GM12878 (cell line): ENCODE measurements at regions of chr10 and their contacts with region 1.

Region 1: DNA sequence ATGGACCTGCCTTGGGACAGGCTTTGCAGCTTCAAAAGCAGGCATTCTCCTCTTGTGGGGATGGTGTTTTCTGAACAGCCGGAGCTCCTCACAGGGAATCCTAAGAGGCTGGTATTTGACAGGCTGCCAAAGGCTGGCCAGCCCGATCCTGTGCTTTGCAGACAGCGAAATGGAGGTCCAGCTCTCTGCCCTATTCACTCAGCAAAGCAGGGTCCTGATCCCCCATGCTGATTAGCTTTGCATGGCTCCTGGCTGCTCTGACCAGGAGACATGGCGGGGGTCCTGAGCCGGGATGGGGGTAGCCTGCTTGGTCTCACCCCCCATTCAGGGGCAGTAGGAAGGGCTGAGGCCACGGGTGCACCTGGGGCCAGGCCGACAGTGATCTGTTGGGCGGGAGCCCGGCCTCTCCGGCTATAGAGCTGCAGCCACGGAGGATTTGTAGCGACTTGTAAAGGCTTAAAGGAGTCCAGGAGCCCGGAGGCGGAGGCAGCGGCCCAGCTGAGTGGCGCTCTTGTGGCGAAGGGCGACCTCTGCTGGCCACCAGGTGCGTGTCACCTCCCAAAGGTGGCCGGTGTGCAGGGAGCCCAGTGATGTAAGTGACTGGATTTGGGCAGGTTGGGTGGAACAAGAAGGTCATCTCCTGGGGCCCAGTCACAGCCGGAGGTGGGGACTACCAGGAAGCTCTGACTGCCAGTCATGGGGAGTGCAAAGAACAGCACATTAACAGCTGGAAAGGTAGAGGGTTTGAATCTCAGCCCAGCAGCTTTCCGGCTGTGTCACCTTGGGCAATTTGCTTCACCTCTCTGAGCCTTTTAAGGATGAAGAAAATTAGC is 126.5 kb downstream of the ZMIZ1 start:
- DNase-seq: no peak
- ATAC-seq: peak; percentile 94
- H3K4me3 ChIP-seq: no peak overlapping the region
- H3K27ac ChIP-seq: no peak overlapping the region
- H3K4me1 ChIP-seq: no peaks in the 10 kb centered on the region
- H3K27me3 ChIP-seq: no peaks in the 10 kb centered on the region
- CTCF ChIP-seq: peak; percentile 88 to 97 (median 92)
- EP300 ChIP-seq: no peak
- POLR2A ChIP-seq: no peak
- RAD21 ChIP-seq: peak; percentile 91

Region 2: GRCh38 chr10:78047314-78047891 is 1147.9 kb before region 1 on chr10:
- CTCF ChIA-PET with region 1: interaction called, 42 read pairs
- POLR2A ChIA-PET with region 1: no interaction called
- RAD21 ChIA-PET with region 1: interaction called, 34 read pairs
- SMC1A ChIA-PET with region 1: interaction called, 21 read pairs
- in situ Hi-C with region 1: loop called (anchors 5 kb)
- intact Hi-C with region 1: loop called (anchors 1 kb)
- DNase-seq: no peak
- ATAC-seq: peak; percentile 81
- H3K4me3 ChIP-seq: no peak overlapping the region
- H3K27ac ChIP-seq: no peak overlapping the region
- H3K4me1 ChIP-seq: peaks cover 17% of the 10 kb centered on the region
- H3K27me3 ChIP-seq: no peaks in the 10 kb centered on the region
- CTCF ChIP-seq: peak; percentile 88 to 92 (median 91)
- EP300 ChIP-seq: no peak
- POLR2A ChIP-seq: no peak
- RAD21 ChIP-seq: peak; percentile 90

Region 3: GRCh38 chr10:78437998-78438906 is 757.1 kb before region 1 on chr10:
- CTCF ChIA-PET with region 1: no interaction called
- POLR2A ChIA-PET with region 1: no interaction called
- RAD21 ChIA-PET with region 1: no interaction called
- SMC1A ChIA-PET with region 1: no interaction called
- in situ Hi-C with region 1: no loop called
- intact Hi-C with region 1: loop called (anchors 10 kb)
- DNase-seq: no peak
- ATAC-seq: peak; percentile 73
- H3K4me3 ChIP-seq: no peak overlapping the region
- H3K27ac ChIP-seq: no peak overlapping the region
- H3K4me1 ChIP-seq: no peaks in the 10 kb centered on the region
- H3K27me3 ChIP-seq: peaks cover 0 to 2% of the 10 kb centered on the region in 2 experiments; a peak in 2 of 4 replicates
- CTCF ChIP-seq: peak in 1 of 3 experiments; percentile 24; a peak in 2 of 6 replicates
- EP300 ChIP-seq: no peak
- POLR2A ChIP-seq: no peak
- RAD21 ChIP-seq: no peak

Region 4: GRCh38 chr10:78664929-78665553 is 530.3 kb before region 1 on chr10:
- CTCF ChIA-PET with region 1: interaction called, 31 read pairs
- POLR2A ChIA-PET with region 1: no interaction called
- RAD21 ChIA-PET with region 1: interaction called, 4 read pairs
- SMC1A ChIA-PET with region 1: interaction called, 9 read pairs
- in situ Hi-C with region 1: no loop called
- intact Hi-C with region 1: loop called (anchors 1 kb)
- DNase-seq: no peak
- ATAC-seq: no peak
- H3K4me3 ChIP-seq: no peak overlapping the region
- H3K27ac ChIP-seq: no peak overlapping the region
- H3K4me1 ChIP-seq: no peaks in the 10 kb centered on the region
- H3K27me3 ChIP-seq: no peaks in the 10 kb centered on the region
- CTCF ChIP-seq: peak; percentile 29 to 58 (median 50); a peak in 4 of 6 replicates
- EP300 ChIP-seq: no peak
- POLR2A ChIP-seq: no peak
- RAD21 ChIP-seq: peak; percentile 26; the same call in 1 of the 2 replicates

Region 5: DNA sequence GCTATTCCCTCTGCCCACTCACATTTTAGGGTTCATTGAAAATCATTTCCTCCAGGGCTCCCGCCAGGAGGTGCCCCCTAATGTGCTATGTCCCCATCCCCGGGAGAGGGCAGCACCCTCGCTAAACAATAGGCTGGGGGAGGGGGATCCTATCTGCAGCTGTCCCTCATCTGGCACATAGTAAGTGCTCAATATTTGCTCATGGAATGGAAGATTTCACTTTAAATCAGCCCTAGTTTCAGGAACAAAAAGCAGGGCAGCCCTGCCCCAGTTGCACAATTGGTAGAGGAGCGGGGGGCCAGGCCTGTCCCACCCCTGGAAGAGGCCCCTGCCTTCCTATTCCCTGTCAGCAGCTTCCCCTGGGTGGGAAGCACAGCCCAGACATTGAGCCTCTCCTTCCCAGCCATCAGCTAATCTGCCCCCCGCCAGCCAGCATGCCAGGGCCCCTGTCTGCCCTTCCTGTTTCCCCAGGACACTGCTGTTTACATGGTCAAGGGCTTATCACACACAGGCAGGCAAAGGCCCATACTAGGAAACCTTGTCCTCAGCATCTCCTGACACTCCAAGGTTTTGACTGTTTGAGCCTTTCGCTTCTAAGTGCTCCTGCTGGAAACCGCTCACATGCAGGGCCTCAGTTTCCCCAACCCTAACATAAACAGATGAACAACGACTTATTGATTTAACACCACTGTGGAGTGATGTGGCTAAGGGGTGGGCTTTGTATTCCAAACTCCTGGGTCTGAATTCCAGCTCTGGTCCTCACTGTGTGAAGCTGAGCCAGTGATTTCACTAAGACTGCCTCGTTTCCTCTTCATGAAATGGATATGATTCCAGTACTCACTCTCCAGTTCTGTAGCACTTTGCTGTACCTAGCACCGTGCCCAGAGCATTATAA is 257.3 kb before region 1 on chr10:
- CTCF ChIA-PET with region 1: interaction called, 4 read pairs
- POLR2A ChIA-PET with region 1: no interaction called
- RAD21 ChIA-PET with region 1: interaction called, 5 read pairs
- SMC1A ChIA-PET with region 1: interaction called, 5 read pairs
- in situ Hi-C with region 1: no loop called
- intact Hi-C with region 1: loop called (anchors 1 kb)
- DNase-seq: no peak
- ATAC-seq: peak; percentile 55
- H3K4me3 ChIP-seq: no peak overlapping the region
- H3K27ac ChIP-seq: no peak overlapping the region
- H3K4me1 ChIP-seq: no peaks in the 10 kb centered on the region
- H3K27me3 ChIP-seq: peaks cover 0 to 2% of the 10 kb centered on the region in 2 experiments; a peak in 2 of 4 replicates
- CTCF ChIP-seq: peak; percentile 24 to 35 (median 29); a peak in 4 of 6 replicates
- EP300 ChIP-seq: no peak
- POLR2A ChIP-seq: no peak
- RAD21 ChIP-seq: peak; percentile 41; the same call in 1 of the 2 replicates

Region 6: GRCh38 chr10:79068562-79069324 is 126.6 kb before region 1 on chr10 and contains the start of gene ZMIZ1:
- CTCF ChIA-PET with region 1: interaction called, 4 read pairs
- POLR2A ChIA-PET with region 1: no interaction called
- RAD21 ChIA-PET with region 1: interaction called, 8 read pairs
- SMC1A ChIA-PET with region 1: no interaction called
- in situ Hi-C with region 1: no loop called
- intact Hi-C with region 1: loop called (anchors 2 kb)
- DNase-seq: no peak
- ATAC-seq: peak; percentile 58
- H3K4me3 ChIP-seq: peak within 1 kb of the TSS; percentile 84
- H3K27ac ChIP-seq: no peak within 1 kb of the TSS
- H3K4me1 ChIP-seq: peaks cover 4% of the 10 kb centered on the region; the same call in 1 of the 2 replicates
- H3K27me3 ChIP-seq: peaks cover 3 to 7% of the 10 kb centered on the region in 2 experiments
- CTCF ChIP-seq: peak; percentile 13 to 36 (median 19); a peak in 3 of 6 replicates
- EP300 ChIP-seq: 0 out of 4 replicates have a peak, but pooled peaks of 1 of the 2 experiments have one; percentile 14
- POLR2A ChIP-seq: no peak
- RAD21 ChIP-seq: peak; percentile 55
- polyA plus RNA-seq, gene ZMIZ1: 3.1 to 4.5 TPM

Region 7: DNA sequence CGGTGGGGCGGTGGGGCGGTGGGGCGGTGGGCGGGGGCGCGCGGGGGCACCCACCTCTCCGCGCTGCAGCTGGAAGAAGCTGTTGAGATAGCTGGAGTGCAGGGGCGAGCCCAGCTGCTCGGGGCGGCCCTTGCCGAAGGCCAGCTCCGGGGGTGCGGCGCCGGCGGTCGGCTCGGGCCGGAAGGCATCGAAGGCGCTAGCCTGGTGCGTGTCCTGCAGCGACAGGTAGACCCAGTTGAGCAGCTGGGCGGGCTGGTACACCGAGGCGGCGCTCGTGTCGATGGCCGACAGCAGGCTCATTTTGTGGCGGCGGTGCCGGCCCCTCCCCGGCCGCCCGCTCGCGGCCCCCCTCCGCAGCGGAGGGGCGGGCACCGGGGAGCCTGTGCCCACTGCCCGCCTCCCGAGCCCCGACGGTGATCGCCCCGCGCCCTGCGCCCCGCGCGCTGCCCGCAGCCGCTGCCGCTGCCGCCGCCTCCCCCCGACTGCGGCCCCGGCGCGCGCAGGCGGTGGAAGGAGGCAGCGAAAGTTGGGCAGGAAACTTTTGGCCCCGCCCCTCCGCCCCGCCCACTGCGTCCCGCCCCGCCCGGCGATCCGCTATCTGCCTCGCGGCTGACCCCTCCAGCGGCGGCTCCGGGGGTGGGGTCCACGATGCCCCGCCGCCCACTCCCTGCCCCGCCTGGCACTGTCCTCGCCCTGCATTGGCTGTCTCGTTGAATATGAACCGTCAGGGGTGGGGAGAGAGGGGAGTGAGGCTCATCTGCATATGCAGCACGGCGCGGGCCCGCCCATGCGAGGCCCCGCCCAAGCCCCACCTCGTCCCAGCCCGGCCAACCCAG is 250.1 kb after region 1 on chr10 and contains the start of gene ZCCHC24:
- CTCF ChIA-PET with region 1: no interaction called
- POLR2A ChIA-PET with region 1: no interaction called
- RAD21 ChIA-PET with region 1: no interaction called
- SMC1A ChIA-PET with region 1: no interaction called
- in situ Hi-C with region 1: no loop called
- intact Hi-C with region 1: no loop called
- DNase-seq: peak; percentile 82
- ATAC-seq: peak; percentile 97
- H3K4me3 ChIP-seq: peak within 1 kb of the TSS; percentile 62
- H3K27ac ChIP-seq: no peak within 1 kb of the TSS
- H3K4me1 ChIP-seq: peaks cover 18% of the 10 kb centered on the region
- H3K27me3 ChIP-seq: peaks cover 0 to 3% of the 10 kb centered on the region in 2 experiments; a peak in 1 of 4 replicates
- CTCF ChIP-seq: no peak
- EP300 ChIP-seq: no peak
- POLR2A ChIP-seq: peak; percentile 64
- RAD21 ChIP-seq: no peak
- polyA plus RNA-seq, gene ZCCHC24: 0.02 TPM in 1 of 2 experiments, not detected in the other